ENCODE measurements at regions of chr12 and their contacts with region 1.

Region 1: DNA sequence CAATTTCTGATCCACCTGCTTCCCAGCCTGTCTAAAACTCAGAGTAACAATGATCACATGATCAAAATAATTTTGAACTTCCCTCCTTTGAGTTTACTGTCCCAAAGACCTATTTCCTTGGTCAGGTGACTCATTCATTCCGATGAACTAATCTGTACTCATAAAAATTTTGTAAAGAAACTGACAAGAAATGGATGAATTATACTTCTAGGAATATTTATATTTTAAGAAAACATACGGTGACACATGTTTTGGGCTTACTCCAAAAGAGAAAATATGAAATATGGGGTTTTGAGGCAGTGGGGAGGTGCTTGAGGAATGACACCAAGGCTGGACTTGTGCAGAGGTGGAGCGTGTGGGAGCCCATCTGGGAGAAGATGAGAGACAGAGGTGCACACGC is 42.0 kb downstream of the GUCY2C start:
- DNase-seq: no peak
- CTCF ChIP-seq: no peak

Region 2: GRCh38 chr12:14664510-14664909 is 10.1 kb after region 1 on chr12:
- CTCF ChIA-PET with region 1: interaction called, 13 read pairs
- POLR2A ChIA-PET with region 1: no interaction called
- DNase-seq: peak; percentile 50
- CTCF ChIP-seq: peak; percentile 70

Measured in GM10248 (cell line).